Activated B cell treated with CpG ODN at 0.5 μM for 24 hours (primary cell): ENCODE measurements at regions of chr12 and their contacts with region 1.

Region 1: GRCh38 chr12:121712461-121713256 is at the start of gene TMEM120B:
- DNase-seq: peak; percentile 86
- ATAC-seq: peak; percentile 94
- H3K4me3 Mint-ChIP-seq: peak within 1 kb of the TSS; percentile 97
- H3K27ac Mint-ChIP-seq: peak within 1 kb of the TSS; percentile 90
- H3K4me1 Mint-ChIP-seq: peaks cover 32% of the 10 kb centered on the region
- H3K27me3 Mint-ChIP-seq: no peaks in the 10 kb centered on the region
- CTCF ChIP-seq: no peak
- total RNA-seq, gene TMEM120B: 7.3 and 8.3 TPM in 2 replicates

Region 2: GRCh38 chr12:121079736-121080272 is 632.9 kb before region 1 on chr12:
- CTCF ChIA-PET with region 1: no interaction called
- POLR2A ChIA-PET with region 1: no interaction called
- intact Hi-C with region 1: no loop called
- DNase-seq: no peak
- ATAC-seq: no peak
- H3K4me3 Mint-ChIP-seq: no peak overlapping the region
- H3K27ac Mint-ChIP-seq: no peak overlapping the region
- H3K4me1 Mint-ChIP-seq: no peaks in the 10 kb centered on the region
- H3K27me3 Mint-ChIP-seq: peaks cover 3% of the 10 kb centered on the region
- CTCF ChIP-seq: no peak

Region 3: GRCh38 chr12:121668750-121669520 is 43.7 kb before region 1 on chr12:
- CTCF ChIA-PET with region 1: no interaction called
- POLR2A ChIA-PET with region 1: no interaction called
- intact Hi-C with region 1: no loop called
- DNase-seq: peak; percentile 38
- ATAC-seq: no peak
- H3K4me3 Mint-ChIP-seq: no peak overlapping the region
- H3K27ac Mint-ChIP-seq: peak overlapping the region; percentile 14
- H3K4me1 Mint-ChIP-seq: peaks cover 49% of the 10 kb centered on the region
- H3K27me3 Mint-ChIP-seq: no peaks in the 10 kb centered on the region
- CTCF ChIP-seq: no peak

Region 4: GRCh38 chr12:121781998-121782979 is 69.6 kb after region 1 on chr12:
- CTCF ChIA-PET with region 1: no interaction called
- POLR2A ChIA-PET with region 1: interaction called, 10 read pairs
- intact Hi-C with region 1: no loop called
- DNase-seq: peak; percentile 61
- ATAC-seq: peak; percentile 76
- H3K4me3 Mint-ChIP-seq: peak overlapping the region; percentile 84
- H3K27ac Mint-ChIP-seq: peak overlapping the region; percentile 98
- H3K4me1 Mint-ChIP-seq: peaks cover 74% of the 10 kb centered on the region
- H3K27me3 Mint-ChIP-seq: no peaks in the 10 kb centered on the region
- CTCF ChIP-seq: no peak

Region 5: DNA sequence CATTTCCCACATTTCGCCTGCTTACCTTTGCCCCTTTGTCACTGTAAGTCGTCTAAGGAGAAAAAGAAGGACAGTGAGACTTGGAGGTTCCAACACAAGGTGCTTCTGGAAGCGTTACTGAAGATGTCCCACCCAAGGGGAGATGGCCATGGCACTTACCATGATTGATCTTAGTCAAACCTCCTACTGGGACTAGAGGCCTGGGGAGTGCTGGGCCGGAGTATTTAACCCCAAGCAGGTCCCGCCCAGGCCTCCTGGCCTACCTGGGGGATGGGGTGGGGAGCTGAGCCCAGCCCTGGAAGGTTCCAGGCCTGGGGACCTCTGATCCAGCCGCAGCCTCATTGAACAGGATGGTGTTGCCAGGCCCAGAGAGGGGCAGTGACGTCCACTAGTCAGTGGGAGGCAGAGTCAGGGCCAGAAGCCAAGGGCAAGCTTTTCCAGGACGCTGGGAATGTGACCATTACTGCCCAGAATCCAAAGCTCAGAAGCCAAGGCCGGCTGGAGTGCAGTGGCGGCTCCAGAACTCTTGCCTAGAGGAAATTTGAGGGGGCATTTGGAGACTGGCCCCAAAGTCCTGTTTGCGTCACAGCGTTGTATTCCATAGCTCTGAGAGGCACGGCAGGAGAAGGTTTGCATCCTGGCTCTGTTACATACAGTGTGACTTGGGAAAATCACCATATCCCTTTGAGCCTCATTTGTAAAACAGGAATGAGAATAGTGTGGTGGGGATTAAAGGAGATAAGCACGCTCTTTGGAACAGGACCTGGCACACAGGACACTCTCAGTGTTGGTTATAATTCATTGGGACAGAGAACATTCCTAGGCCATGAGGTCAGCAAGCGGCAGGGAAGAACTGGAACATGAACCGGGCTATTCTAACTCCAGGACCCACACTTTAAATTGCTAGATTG is 146.3 kb after region 1 on chr12 and contains the start of gene HPD:
- CTCF ChIA-PET with region 1: no interaction called
- POLR2A ChIA-PET with region 1: no interaction called
- intact Hi-C with region 1: no loop called
- DNase-seq: no peak
- ATAC-seq: no peak
- H3K4me3 Mint-ChIP-seq: no peak within 1 kb of the TSS
- H3K27ac Mint-ChIP-seq: no peak within 1 kb of the TSS
- H3K4me1 Mint-ChIP-seq: peaks cover 9% of the 10 kb centered on the region
- H3K27me3 Mint-ChIP-seq: no peaks in the 10 kb centered on the region
- CTCF ChIP-seq: no peak
- total RNA-seq, gene HPD: not detected in 2 replicates